Body of pancreas (tissue), 4 donors: ENCODE measurements at regions of chr12 and their contacts with region 1.

Region 1: DNA sequence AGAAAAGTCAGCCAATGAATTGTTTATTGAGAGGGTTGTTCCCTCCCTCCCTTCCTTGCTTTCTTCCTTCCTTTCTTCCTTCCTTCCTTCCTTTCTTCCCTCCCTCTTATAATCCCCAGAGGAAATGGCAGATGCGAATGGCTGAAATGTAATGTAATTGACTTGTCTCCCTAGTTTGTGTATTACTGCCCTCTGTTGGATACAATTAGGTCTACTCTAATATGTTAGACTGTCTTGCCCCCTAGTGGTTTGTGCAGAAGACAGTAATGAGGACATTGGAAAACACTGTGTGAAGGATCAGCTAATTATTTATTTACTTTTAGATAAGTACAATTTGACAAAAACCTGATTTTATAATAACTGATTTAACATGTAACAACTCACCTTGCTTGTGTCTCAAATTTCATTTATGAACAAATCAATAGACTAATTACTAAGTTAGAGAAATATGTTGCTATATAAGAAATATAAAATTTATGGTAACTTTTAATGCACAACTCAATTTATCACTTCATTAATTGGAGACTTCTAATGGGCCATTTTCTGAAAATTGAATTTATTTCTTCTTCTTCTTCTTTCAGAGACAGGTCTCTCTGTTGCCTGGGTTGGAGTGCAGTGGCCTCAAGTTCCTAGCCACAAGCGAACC is 229.8 kb upstream of the LRIG3 start:
- DNase-seq: peak in 3 of 4 donors; percentile 11 to 42 (median 16)
- ATAC-seq: peak; percentile 97
- H3K4me3 ChIP-seq: no peak overlapping the region
- H3K27ac ChIP-seq: no peak overlapping the region
- H3K4me1 ChIP-seq: no peaks in the 10 kb centered on the region
- H3K27me3 ChIP-seq: no peaks in the 10 kb centered on the region
- CTCF ChIP-seq: peak; percentile 75 to 100 (median 99)
- POLR2A ChIP-seq: no peak

Region 2: DNA sequence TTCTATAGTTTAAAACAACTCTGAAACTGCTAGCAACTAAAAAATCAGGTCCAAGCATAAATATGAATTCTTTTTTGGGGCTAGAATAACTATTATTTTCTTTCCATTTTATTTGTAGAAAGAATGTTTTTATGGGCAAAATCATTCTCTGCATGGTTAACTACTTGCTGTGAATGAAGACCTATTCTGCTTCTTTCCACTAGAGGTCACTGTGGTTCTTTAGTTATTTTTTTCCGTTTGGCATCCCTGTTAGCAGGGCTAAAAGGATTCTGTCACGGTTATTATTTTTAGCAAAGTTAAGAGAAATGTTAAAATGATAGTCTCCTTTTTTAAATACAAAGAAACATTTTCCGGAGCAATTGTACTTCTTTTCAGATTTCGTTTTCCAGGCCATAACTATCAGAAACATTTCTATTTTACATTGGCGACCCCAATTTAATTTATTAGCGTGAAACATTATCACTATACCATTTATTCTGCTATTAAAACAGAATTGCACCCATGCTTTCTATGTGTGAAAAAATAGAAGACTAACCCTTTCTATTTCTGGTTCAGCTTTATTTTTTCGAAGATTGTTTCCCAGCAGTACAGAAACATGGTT is 804.0 kb before region 1 on chr12:
- intact Hi-C with region 1: loop called (anchors 10 kb)
- DNase-seq: no peak
- ATAC-seq: peak; percentile 48
- H3K4me3 ChIP-seq: no peak overlapping the region
- H3K27ac ChIP-seq: no peak overlapping the region
- H3K4me1 ChIP-seq: no peaks in the 10 kb centered on the region
- H3K27me3 ChIP-seq: no peaks in the 10 kb centered on the region
- CTCF ChIP-seq: peak; percentile 47 to 90 (median 76)
- POLR2A ChIP-seq: no peak

Region 3: GRCh38 chr12:58537278-58537677 is 612.8 kb before region 1 on chr12:
- intact Hi-C with region 1: loop called (anchors 5 kb)
- DNase-seq: no peak
- ATAC-seq: no peak
- H3K4me3 ChIP-seq: no peak overlapping the region
- H3K27ac ChIP-seq: no peak overlapping the region
- H3K4me1 ChIP-seq: no peaks in the 10 kb centered on the region
- H3K27me3 ChIP-seq: no peaks in the 10 kb centered on the region
- CTCF ChIP-seq: no peak
- POLR2A ChIP-seq: no peak